Left ventricle myocardium superior (tissue), 1 donor: ENCODE measurements at regions of chr15 and their contacts with region 1.

Region 1: GRCh38 chr15:42704492-42704926 is 32.4 kb downstream of the CDAN1 start:
- DNase-seq: peak; percentile 47
- ATAC-seq: peak; percentile 96

Region 2: DNA sequence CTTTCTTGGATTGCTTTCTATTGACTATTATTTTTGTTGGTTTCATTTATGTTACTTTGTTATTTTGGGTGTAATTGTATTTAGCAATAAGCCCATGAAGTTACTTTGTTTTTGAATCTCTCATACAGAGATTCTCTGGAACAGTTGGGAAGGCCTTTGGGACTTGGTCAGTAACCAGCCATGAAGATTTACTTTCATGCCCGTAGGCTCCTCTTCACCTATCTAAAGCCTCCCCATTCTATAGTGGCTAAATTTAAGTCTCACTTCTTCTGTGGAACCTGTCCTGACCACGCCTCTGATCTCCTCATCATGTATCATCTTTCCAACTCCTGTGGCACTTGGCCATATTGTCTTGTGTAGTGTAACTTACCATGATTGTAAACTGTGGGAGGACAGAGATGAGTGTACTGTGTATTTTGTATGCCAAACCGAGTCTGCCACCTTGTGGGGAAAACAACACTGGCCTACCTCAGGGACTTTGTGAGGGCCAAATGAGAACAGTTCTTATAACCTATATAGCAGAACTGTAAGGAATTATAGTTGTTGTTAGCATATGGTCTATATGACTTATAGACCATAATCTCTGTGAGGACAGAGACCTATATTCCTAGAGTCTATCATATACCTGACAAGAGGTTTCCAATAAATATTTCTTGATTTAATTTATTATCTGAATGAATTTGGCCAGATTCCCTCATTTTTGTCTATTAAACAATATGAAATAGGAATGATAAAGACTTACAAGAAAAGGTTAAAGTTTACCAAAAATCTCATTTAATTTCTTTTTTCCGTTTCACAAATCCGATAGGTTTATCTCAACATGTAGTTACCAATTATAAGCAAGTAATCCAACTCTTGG is 54.1 kb before region 1 on chr15:
- intact Hi-C with region 1: no loop called
- DNase-seq: peak; percentile 36
- ATAC-seq: peak; percentile 96

Region 3: DNA sequence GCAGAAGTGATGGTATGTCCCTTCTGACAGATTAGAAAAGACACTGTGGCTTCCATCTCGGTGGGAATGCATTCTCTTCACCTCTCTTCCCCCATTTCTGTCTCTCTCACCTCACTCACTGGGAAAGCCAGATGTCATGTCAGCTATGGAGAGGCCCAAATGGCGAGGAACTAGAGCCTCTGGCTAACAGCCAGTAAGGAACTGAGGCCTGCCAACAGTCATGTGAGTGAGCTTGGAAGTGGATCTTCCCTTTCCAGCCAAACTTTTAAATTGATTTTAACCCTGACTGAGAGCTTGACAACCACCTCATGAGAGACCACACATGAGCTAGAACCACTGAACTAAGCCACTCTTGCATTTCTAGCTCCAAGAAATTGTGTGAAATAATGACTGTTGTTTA is 67.6 kb after region 1 on chr15:
- intact Hi-C with region 1: no loop called
- DNase-seq: peak; percentile 42
- ATAC-seq: peak; percentile 54

Region 4: GRCh38 chr15:42929306-42929848 is 224.9 kb after region 1 on chr15:
- intact Hi-C with region 1: loop called (anchors 5 kb)
- DNase-seq: no peak
- ATAC-seq: peak; percentile 68